ENCODE measurements at regions of chr4 and their contacts with region 1.

Region 1: GRCh38 chr4:12633053-12633651 is 851.0 kb downstream of the RAB28 start:
- DNase-seq: peak; percentile 48
- H3K4me3 ChIP-seq: peak overlapping the region in 1 of 2 experiments; percentile 41; a peak in 1 of 4 replicates
- H3K27ac ChIP-seq: no peak overlapping the region
- H3K4me1 ChIP-seq: no peaks in the 10 kb centered on the region; a peak in 1 of 4 replicates
- H3K27me3 ChIP-seq: no peaks in the 10 kb centered on the region
- CTCF ChIP-seq: peak; percentile 79
- EP300 ChIP-seq: no peak
- RAD21 ChIP-seq: peak; percentile 94

Region 2: GRCh38 chr4:11765849-11766453 is 867.2 kb before region 1 on chr4:
- CTCF ChIA-PET with region 1: interaction called, 43 read pairs
- POLR2A ChIA-PET with region 1: no interaction called
- DNase-seq: peak; percentile 26
- H3K4me3 ChIP-seq: no peak overlapping the region
- H3K27ac ChIP-seq: no peak overlapping the region
- H3K4me1 ChIP-seq: no peaks in the 10 kb centered on the region
- H3K27me3 ChIP-seq: no peaks in the 10 kb centered on the region
- CTCF ChIP-seq: peak; percentile 48
- EP300 ChIP-seq: no peak
- RAD21 ChIP-seq: peak; percentile 53

Region 3: GRCh38 chr4:12041828-12042227 is 591.3 kb before region 1 on chr4:
- CTCF ChIA-PET with region 1: interaction called, 14 read pairs
- POLR2A ChIA-PET with region 1: no interaction called
- DNase-seq: no peak
- H3K4me3 ChIP-seq: no peak overlapping the region
- H3K27ac ChIP-seq: no peak overlapping the region
- H3K4me1 ChIP-seq: no peaks in the 10 kb centered on the region
- H3K27me3 ChIP-seq: no peaks in the 10 kb centered on the region
- CTCF ChIP-seq: no peak
- EP300 ChIP-seq: no peak
- RAD21 ChIP-seq: peak; percentile 21; the same call in 1 of the 2 replicates

Region 4: GRCh38 chr4:12304905-12305304 is 328.2 kb before region 1 on chr4:
- CTCF ChIA-PET with region 1: interaction called, 11 read pairs
- POLR2A ChIA-PET with region 1: no interaction called
- DNase-seq: no peak
- H3K4me3 ChIP-seq: no peak overlapping the region
- H3K27ac ChIP-seq: no peak overlapping the region
- H3K4me1 ChIP-seq: no peaks in the 10 kb centered on the region
- H3K27me3 ChIP-seq: no peaks in the 10 kb centered on the region
- CTCF ChIP-seq: no peak
- EP300 ChIP-seq: no peak
- RAD21 ChIP-seq: no peak

Region 5: DNA sequence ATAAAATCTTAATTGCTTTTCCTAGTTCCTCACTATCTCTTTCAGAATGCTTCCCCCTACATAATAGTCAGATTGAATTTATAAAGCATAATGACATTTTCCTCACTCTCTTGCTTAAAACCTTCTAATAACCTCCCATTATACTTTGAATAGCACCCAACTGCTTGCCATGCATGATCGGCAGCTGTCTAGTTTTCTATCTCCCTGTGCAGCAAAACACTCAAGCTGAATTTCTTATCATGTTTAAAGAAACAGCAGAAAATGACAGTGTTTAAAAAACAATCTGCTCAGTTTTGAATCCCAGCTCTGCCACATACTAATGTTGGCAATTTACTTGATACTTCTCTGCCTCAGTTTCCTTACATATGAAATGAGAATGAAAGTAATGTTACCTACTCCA is 257.3 kb before region 1 on chr4:
- CTCF ChIA-PET with region 1: interaction called, 12 read pairs
- POLR2A ChIA-PET with region 1: no interaction called
- DNase-seq: no peak
- H3K4me3 ChIP-seq: no peak overlapping the region
- H3K27ac ChIP-seq: no peak overlapping the region
- H3K4me1 ChIP-seq: no peaks in the 10 kb centered on the region
- H3K27me3 ChIP-seq: no peaks in the 10 kb centered on the region
- CTCF ChIP-seq: no peak
- EP300 ChIP-seq: no peak
- RAD21 ChIP-seq: no peak

Region 6: GRCh38 chr4:12612876-12613275 is 20.3 kb before region 1 on chr4:
- CTCF ChIA-PET with region 1: interaction called, 11 read pairs
- POLR2A ChIA-PET with region 1: no interaction called
- DNase-seq: no peak
- H3K4me3 ChIP-seq: no peak overlapping the region
- H3K27ac ChIP-seq: no peak overlapping the region
- H3K4me1 ChIP-seq: no peaks in the 10 kb centered on the region; a peak in 1 of 4 replicates
- H3K27me3 ChIP-seq: no peaks in the 10 kb centered on the region
- CTCF ChIP-seq: no peak
- EP300 ChIP-seq: no peak
- RAD21 ChIP-seq: no peak